ENCODE measurements at regions of chr13 and their contacts with region 1.

Region 1: DNA sequence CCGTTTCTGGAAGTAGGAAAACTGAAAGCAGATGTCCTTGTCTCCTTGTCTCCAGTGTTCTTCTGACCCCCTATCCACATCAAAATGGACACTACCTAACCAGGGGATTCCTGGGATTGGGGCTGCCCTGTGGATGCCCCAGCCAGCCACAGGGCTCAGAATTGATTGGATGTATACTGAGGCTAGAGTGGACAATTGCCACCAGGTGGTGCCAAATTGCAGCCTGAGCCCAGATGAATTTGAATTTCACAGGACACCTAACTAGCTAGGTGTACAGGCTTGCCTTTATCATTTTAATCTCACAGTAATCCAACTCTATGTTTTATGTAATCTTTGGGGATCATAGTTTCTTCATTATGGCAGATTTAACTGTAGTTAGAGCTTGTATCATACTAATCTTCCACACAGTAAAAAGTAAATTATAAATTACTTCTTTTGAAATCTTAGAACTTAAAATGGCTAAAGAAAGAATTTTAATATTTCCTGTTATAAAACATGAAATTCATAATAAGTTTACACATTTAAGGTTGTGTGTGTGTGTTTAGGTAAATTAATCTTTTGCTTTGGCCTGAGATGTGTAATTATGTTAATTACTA is 58.0 kb downstream of the PIBF1 start:
- DNase-seq: peak in 7 of 9 experiments; percentile 9 to 56 (median 23)
- ATAC-seq: peak; percentile 52
- H3K4me3 ChIP-seq: no peak overlapping the region
- H3K4me3 Mint-ChIP-seq: no peak overlapping the region
- H3K27ac ChIP-seq: no peak overlapping the region
- H3K27ac Mint-ChIP-seq: no peak overlapping the region
- H3K4me1 ChIP-seq: no peaks in the 10 kb centered on the region
- H3K4me1 Mint-ChIP-seq: no peaks in the 10 kb centered on the region
- H3K27me3 ChIP-seq: no peaks in the 10 kb centered on the region
- H3K27me3 Mint-ChIP-seq: no peaks in the 10 kb centered on the region
- CTCF ChIP-seq: peak; percentile 19

Region 2: GRCh38 chr13:73708393-73708985 is 868.6 kb after region 1 on chr13:
- CTCF ChIA-PET with region 1: no interaction called
- POLR2A ChIA-PET with region 1: no interaction called
- intact Hi-C with region 1: loop called (anchors 1 to 2 kb)
- DNase-seq: peak; percentile 9 to 83 (median 52)
- ATAC-seq: peak; percentile 94
- H3K4me3 ChIP-seq: no peak overlapping the region
- H3K4me3 Mint-ChIP-seq: no peak overlapping the region
- H3K27ac ChIP-seq: no peak overlapping the region
- H3K27ac Mint-ChIP-seq: no peak overlapping the region
- H3K4me1 ChIP-seq: peaks cover 8% of the 10 kb centered on the region
- H3K4me1 Mint-ChIP-seq: peaks cover 11% of the 10 kb centered on the region
- H3K27me3 ChIP-seq: no peaks in the 10 kb centered on the region
- H3K27me3 Mint-ChIP-seq: no peaks in the 10 kb centered on the region
- CTCF ChIP-seq: peak; percentile 92

Measured in CD8-positive, alpha-beta T cell (primary cell).